AG04449 (cell line): ENCODE measurements at regions of chr22 and their contacts with region 1.

Region 1: GRCh38 chr22:43289976-43290721 is 53.0 kb downstream of the SCUBE1 start:
- DNase-seq: no peak
- H3K4me3 ChIP-seq: no peak overlapping the region
- CTCF ChIP-seq: no peak

Region 2: DNA sequence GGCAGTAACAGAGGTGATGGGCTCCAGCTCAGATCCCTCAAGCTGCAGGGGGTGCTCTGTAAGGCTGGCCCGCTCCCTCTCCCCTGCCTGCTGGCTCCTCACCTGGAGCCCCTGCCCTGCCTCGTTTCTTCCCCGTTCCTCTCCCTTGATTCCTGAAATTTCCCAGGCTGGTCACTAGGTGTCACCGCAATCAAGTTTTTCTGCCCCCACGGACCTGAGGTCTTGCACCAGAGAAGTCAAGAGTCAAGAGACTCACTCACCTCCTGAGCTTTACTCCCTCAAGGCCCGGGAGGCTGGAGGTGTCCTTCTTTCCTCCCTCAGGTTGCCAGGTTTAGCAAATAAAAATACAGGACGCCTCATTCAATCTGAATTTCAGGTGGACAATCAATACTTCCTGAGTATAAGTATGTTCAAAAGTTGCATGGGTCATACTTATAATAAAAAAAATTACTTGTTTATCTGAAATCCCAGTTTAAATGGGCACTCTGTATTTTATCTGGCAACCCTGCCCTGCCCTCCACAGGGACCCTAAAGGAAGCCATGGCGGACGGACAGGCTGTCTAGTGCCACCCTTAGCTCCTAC is 16.2 kb before region 1 on chr22:
- CTCF ChIA-PET with region 1: interaction called, 14 read pairs
- POLR2A ChIA-PET with region 1: no interaction called
- DNase-seq: no peak
- H3K4me3 ChIP-seq: no peak overlapping the region
- CTCF ChIP-seq: peak; percentile 67